Mammary epithelial cell (primary cell): ENCODE measurements at regions of chr20 and their contacts with region 1.

Region 1: GRCh38 chr20:56171087-56172012 is 77.2 kb upstream of the MC3R start:
- DNase-seq: peak; percentile 9
- H3K4me3 ChIP-seq: no peak overlapping the region
- H3K27ac ChIP-seq: no peak overlapping the region
- H3K4me1 ChIP-seq: no peaks in the 10 kb centered on the region
- H3K27me3 ChIP-seq: no peaks in the 10 kb centered on the region
- CTCF ChIP-seq: peak; percentile 48 to 75

Region 2: DNA sequence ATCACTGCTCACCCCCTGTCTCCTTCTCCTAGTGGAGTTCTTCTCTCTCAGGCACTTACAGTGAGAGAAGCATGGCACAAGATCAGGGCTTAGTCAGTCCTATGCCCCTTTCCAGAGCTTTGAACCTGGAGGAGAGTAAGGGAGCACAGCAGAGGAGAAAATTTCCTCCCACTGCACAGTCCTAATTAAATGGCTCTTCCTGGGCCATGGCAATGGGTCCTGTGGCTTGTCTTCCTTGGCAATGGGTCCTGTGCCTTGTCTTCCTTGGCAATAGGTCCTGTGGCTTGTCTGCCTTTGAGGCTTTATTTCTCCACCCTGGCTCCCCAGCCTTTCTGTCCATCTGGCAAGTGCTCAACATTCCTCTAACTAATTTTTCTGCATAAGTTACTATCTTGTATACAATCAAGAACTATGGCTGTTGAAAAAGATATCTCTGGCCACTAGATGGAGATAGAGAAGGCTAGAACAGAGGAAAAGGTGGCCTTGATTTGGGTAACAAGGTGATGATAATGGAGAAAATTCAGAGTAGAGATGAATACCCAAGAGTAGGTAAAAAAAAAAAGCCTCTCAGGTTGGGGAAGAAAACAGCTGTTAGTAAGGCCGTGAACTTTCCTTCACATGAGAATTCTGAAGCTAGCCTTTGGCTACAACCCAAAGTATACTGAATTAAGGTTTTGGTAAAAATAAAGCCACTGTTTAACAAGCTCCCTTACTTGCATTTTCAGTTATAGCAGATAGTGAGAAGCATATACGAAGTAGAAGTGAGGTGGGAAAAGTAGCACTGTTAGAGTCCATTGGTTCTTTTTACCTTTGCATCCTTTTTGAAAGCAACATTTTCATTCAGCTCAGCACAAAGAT is 1191.0 kb before region 1 on chr20:
- CTCF ChIA-PET with region 1: no interaction called
- dilution Hi-C with region 1: no loop called
- in situ Hi-C with region 1: loop called in 1 of 2 experiments (anchors 25 kb)
- intact Hi-C with region 1: loop called (anchors 1 kb)
- DNase-seq: peak; percentile 15
- H3K4me3 ChIP-seq: no peak overlapping the region
- H3K27ac ChIP-seq: no peak overlapping the region
- H3K4me1 ChIP-seq: no peaks in the 10 kb centered on the region
- H3K27me3 ChIP-seq: no peaks in the 10 kb centered on the region
- CTCF ChIP-seq: peak; percentile 47 to 56

Region 3: GRCh38 chr20:55406872-55407271 is 764.5 kb before region 1 on chr20:
- CTCF ChIA-PET with region 1: no interaction called
- dilution Hi-C with region 1: no loop called
- in situ Hi-C with region 1: loop called (anchors 10 to 25 kb)
- intact Hi-C with region 1: no loop called
- DNase-seq: no peak
- H3K4me3 ChIP-seq: no peak overlapping the region
- H3K27ac ChIP-seq: no peak overlapping the region
- H3K4me1 ChIP-seq: no peaks in the 10 kb centered on the region
- H3K27me3 ChIP-seq: no peaks in the 10 kb centered on the region
- CTCF ChIP-seq: no peak